Activated CD4-positive, alpha-beta memory T cell treated with anti-CD3 and anti-CD28 coated beads, Interleukin-2, amount 10 ng/mL, durations not matched to agents 7 days and 5 days (primary cell): ENCODE measurements at regions of chr2 and their contacts with region 1.

Region 1: DNA sequence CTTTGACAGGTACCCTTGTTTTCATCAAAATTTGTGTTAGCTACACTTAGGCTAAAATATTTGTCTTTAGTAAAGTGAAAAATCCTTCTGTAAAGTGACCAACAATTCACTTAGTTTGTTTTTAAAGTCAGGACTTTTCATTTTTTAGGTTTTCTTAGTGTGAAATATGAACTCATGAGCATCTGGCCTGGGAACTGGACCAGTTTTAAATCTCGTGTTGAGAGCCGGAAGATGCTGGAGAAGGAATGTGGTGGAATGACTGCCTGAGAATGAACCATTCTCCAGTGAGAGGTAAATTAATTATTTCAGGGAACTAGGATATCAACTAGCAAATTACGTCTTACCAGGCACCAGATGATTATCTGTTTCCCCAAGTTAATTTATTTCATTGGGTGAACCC is 305.7 kb downstream of the AGPS start:
- DNase-seq: no peak
- H3K4me3 Mint-ChIP-seq: no peak overlapping the region
- H3K27ac Mint-ChIP-seq: no peak overlapping the region
- H3K4me1 Mint-ChIP-seq: no peaks in the 10 kb centered on the region
- H3K27me3 Mint-ChIP-seq: peaks cover 25% of the 10 kb centered on the region

Region 2: GRCh38 chr2:177724398-177725287 is 26.4 kb after region 1 on chr2:
- CTCF ChIA-PET with region 1: interaction called, 10 read pairs
- POLR2A ChIA-PET with region 1: no interaction called
- DNase-seq: peak; percentile 53
- H3K4me3 Mint-ChIP-seq: no peak overlapping the region
- H3K27ac Mint-ChIP-seq: no peak overlapping the region
- H3K4me1 Mint-ChIP-seq: no peaks in the 10 kb centered on the region
- H3K27me3 Mint-ChIP-seq: peaks cover 46% of the 10 kb centered on the region